ENCODE measurements at regions of chr14 and their contacts with region 1.

Region 1: DNA sequence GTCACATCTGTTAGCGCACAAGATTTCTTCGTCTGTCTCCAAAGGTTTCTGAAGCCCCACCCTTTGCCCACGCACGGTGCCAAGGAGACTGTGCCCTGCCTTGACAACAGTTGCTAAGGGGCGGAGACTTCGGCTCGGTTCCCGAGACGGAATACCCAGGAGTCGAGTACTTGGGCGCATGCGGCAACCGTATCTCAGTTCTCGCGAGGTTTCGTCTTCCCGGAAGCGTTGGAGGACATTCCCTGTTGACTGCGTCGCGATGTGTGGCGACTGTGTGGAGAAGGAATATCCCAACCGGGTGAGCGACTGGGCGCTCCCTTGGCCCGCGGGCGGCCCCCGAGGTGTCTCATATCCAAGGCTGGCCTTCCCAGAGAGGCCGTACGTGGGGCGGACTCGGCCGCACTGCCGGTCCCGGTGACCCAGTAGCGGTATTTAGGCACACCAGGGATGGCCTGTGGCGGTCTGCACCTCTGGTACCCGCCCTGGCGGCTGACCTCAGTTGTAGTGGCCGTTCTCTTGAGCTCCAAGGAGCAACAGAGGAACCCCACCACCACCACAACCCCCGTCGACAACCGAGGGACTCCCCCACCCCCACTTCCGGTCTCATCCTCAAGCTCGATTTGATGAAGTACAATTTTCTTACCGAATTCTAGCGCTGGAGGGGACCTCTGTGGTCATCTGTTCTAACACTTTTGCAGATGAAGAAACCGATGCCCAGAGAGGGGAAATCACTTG is at the start of gene CHURC1:
- DNase-seq: peak; percentile 98
- H3K4me3 Mint-ChIP-seq: peak within 1 kb of the TSS; percentile 78
- H3K27ac Mint-ChIP-seq: peak within 1 kb of the TSS; percentile 90
- H3K4me1 Mint-ChIP-seq: peaks cover 44% of the 10 kb centered on the region
- H3K27me3 Mint-ChIP-seq: peaks cover 3% of the 10 kb centered on the region
- total RNA-seq, gene CHURC1: 61.7 to 62.6 TPM

Region 2: GRCh38 chr14:64387694-64388532 is 526.5 kb before region 1 on chr14 and contains the start of gene MTHFD1:
- CTCF ChIA-PET with region 1: no interaction called
- POLR2A ChIA-PET with region 1: no interaction called
- intact Hi-C with region 1: loop called (anchors 1 kb)
- DNase-seq: peak; percentile 98
- H3K4me3 Mint-ChIP-seq: peak within 1 kb of the TSS; percentile 99
- H3K27ac Mint-ChIP-seq: peak within 1 kb of the TSS; percentile 95
- H3K4me1 Mint-ChIP-seq: peaks cover 33% of the 10 kb centered on the region
- H3K27me3 Mint-ChIP-seq: peaks cover 3% of the 10 kb centered on the region
- total RNA-seq, gene MTHFD1: 212 to 221 TPM

Region 3: DNA sequence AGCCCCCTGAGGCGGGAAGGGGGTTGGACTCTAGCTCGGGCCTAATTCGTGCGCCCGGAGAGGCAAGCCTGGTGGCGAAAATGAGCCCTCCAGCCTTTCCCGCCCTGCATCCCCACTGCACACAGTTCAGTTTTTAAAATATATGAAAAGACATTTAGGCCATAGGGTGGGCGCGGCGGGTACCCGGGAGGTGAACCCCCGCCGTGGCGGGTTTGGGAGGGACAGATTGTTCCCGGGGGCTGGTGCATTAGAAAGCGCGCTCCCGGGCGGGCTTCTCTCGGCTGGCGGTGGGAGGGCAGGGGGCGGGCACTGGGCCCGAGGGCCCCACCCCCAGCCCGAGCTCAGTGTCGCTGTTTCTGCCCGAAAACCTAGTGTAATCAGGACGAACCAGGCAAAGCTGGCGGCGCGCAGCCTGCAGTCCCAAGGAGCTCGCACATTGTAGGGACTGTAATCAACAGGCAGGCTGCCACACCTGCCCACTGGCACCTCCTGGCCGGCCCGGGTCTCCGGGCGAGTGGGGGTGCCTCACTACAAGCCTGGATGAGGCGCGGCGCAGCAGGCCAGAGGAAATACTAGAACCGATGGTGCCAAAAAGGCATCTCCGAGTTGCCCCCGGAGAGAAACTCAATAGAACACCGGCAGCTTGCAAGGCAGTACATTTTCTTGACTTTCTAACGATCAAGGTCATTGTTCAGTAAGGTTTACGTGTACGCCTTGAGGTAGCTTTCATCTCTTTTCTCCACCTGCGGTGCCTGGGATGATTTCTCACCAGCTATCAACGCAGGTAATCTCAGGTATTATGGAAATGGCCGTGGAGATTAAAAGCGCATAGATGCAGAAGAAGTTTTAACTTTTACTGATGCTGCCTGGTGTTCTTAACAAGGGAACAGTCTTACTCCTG is 33.9 kb before region 1 on chr14:
- CTCF ChIA-PET with region 1: interaction called, 7 read pairs
- POLR2A ChIA-PET with region 1: no interaction called
- intact Hi-C with region 1: loop called (anchors 2 kb)
- DNase-seq: peak; percentile 74
- H3K4me3 Mint-ChIP-seq: peak overlapping the region; percentile 77
- H3K27ac Mint-ChIP-seq: no peak overlapping the region
- H3K4me1 Mint-ChIP-seq: peaks cover 8% of the 10 kb centered on the region
- H3K27me3 Mint-ChIP-seq: peaks cover 29% of the 10 kb centered on the region

Region 4: GRCh38 chr14:64928239-64929013 is 14.0 kb after region 1 on chr14:
- CTCF ChIA-PET with region 1: interaction called, 6 read pairs
- POLR2A ChIA-PET with region 1: interaction called, 12 read pairs
- intact Hi-C with region 1: loop called (anchors 1 kb)
- DNase-seq: no peak
- H3K4me3 Mint-ChIP-seq: no peak overlapping the region
- H3K27ac Mint-ChIP-seq: no peak overlapping the region
- H3K4me1 Mint-ChIP-seq: peaks cover 41% of the 10 kb centered on the region
- H3K27me3 Mint-ChIP-seq: no peaks in the 10 kb centered on the region

Region 5: DNA sequence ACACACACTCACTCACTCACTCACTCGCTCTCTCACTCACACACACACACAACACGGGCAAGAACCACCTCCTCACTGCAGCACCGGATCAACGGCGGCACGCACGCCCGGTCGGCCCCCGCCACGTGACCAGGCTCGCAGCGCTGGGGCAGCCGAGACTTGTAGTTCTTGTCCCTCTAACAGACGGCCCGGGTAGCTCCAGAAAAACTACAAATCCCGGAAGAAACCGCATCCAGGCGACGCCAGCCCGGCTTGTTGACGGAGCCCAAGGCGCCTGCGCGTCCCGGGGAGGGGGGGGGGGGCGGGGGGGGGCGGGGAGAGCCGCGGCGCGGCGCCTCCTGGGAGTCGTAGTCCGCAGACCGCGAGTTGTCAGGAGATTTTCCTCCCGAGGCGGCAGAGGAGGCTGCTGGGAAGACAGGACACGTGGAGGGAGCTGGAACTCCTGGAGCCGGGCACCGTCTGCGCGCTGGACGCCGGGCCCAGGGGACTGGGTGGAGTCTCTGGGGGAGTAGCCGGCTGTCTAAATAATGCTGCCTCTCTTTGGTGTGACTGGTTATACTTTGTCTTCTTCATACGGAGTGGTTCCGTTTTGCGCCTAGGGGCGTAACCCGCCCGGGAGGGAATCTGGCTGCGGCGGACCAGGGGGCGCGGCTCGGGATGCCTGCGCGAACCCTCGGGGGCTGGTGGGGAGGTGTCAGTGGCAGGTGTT is 188.2 kb after region 1 on chr14 and contains the start of gene MAX:
- CTCF ChIA-PET with region 1: no interaction called
- POLR2A ChIA-PET with region 1: interaction called, 3 read pairs
- intact Hi-C with region 1: loop called (anchors 2 kb)
- DNase-seq: peak; percentile 99
- H3K4me3 Mint-ChIP-seq: peak within 1 kb of the TSS; percentile 96
- H3K27ac Mint-ChIP-seq: peak within 1 kb of the TSS; percentile 93
- H3K4me1 Mint-ChIP-seq: peaks cover 34% of the 10 kb centered on the region
- H3K27me3 Mint-ChIP-seq: no peaks in the 10 kb centered on the region
- total RNA-seq, gene MAX: 74.5 to 80.7 TPM

Region 6: DNA sequence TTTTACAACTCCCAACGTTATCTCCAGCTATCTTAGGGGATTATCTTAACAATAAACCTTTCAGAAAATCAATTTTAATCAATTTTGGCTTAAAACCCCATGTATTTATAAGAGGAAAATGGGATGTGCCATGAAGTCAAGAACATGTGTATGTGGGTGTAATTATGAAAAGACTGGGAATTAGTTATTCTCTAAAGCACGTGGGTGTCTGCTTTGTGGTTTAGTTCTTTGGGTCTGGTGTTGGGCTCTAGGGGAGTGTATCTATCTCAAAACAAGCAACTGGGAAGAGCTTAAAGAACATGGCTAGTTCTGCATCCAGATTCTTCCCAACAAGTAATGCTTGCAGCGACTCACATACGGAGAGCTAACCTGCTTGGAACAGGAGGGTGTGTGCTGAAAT is 228.0 kb after region 1 on chr14:
- CTCF ChIA-PET with region 1: no interaction called
- POLR2A ChIA-PET with region 1: no interaction called
- intact Hi-C with region 1: no loop called
- DNase-seq: no peak
- H3K4me3 Mint-ChIP-seq: no peak overlapping the region
- H3K27ac Mint-ChIP-seq: no peak overlapping the region
- H3K4me1 Mint-ChIP-seq: no peaks in the 10 kb centered on the region
- H3K27me3 Mint-ChIP-seq: peaks cover 6% of the 10 kb centered on the region

Measured in activated CD4-positive, alpha-beta memory T cell treated with anti-CD3 and anti-CD28 coated beads for 36 hours (primary cell).